ENCODE measurements at regions of chr3 and their contacts with region 1.

Region 1: DNA sequence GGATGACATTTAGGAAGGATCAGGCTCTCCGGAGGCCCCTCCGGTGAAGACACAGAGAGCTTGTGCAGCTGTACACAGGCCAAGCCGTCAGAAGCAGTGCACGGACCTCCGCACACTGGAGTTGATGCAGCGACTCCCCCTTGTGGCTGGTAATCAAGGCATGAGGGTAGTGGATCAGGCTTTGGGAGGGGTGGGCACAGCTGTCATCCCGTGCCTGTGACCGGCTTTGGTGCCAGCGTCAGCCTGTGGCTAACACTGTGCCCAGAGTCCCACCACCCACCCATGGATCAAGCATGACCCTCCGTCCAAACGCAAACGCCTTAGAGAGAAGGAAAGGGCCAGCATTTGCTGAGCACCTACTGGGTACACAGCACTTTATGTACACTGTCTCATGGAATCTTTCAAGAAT is 8.2 kb upstream of the GRIP2 start:
- DNase-seq: no peak
- H3K4me3 ChIP-seq: no peak overlapping the region
- H3K27ac ChIP-seq: no peak overlapping the region
- H3K4me1 ChIP-seq: no peaks in the 10 kb centered on the region
- H3K27me3 ChIP-seq: no peaks in the 10 kb centered on the region
- CTCF ChIP-seq: peak; percentile 47 to 70 (median 50)

Region 2: DNA sequence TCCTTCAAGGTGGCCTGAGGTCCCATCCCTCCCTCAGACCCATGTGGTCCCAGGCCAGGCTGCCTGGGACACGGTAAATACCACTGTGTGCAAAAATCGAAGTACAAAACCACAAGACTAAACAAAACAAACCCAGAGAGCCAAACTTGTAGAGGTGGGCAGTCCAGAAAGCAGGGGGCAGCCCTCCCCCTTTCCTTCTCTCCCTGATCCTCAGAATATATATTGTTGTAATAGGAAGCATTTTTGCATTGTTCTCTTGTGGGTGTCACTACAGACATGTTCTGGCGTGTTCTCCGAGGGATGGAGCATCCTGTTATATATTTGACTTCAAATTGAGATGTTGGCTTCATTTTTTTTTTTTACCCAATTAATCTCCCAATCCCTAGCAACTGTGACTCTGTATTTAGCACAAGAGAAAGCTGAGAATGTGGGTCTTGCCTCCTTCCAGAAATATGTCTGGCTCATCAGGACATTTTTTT is 59.7 kb before region 1 on chr3:
- intact Hi-C with region 1: no loop called
- DNase-seq: no peak
- H3K4me3 ChIP-seq: no peak overlapping the region
- H3K27ac ChIP-seq: no peak overlapping the region
- H3K4me1 ChIP-seq: peaks cover 0 to 6% of the 10 kb centered on the region in 2 donors
- H3K27me3 ChIP-seq: no peaks in the 10 kb centered on the region
- CTCF ChIP-seq: no peak

Region 3: DNA sequence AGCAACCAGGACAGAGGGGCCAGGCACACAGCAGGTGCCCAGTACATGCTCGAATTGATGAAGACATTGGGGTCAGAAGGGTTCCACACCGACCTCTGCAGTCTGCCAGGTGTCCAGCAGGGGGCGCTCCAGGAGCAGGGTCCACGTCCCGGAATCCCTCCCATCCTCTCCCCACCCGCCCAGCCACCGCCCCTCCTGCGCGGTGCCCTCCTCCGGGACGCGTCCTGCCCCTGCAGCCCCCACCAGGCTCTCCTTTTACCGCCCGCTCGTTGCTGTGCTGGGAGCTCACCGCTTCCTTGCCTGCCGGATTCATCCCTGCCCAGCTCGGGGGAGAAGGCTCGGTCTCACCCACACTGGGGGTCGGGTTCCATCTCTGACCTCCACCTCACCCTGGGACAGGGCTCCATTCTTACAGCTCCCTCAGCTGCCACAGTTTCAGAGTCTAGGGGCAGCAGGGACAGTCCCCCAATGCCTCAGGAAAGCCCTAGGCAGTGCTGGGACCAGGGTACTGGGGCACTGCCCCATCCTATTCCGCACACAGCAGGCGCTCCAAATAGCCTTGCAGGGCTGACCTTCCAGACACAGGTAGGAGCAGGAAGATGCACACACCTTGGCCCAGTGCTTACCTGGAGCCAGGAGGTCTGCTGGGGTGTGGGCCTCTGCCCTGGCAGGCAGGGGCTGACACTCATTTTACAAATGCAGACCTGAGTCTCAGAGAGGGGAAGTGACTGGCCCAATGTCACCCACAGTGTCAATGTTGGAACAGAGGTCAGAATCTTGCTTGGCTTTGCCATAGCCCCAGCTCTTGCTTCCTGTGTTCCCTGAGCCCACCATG is 39.1 kb before region 1 on chr3:
- intact Hi-C with region 1: loop called (anchors 1 kb)
- DNase-seq: peak in 1 of 2 donors; percentile 76
- H3K4me3 ChIP-seq: peak overlapping the region in 1 of 2 donors; percentile 24
- H3K27ac ChIP-seq: no peak overlapping the region
- H3K4me1 ChIP-seq: no peaks in the 10 kb centered on the region
- H3K27me3 ChIP-seq: no peaks in the 10 kb centered on the region
- CTCF ChIP-seq: peak; percentile 64 to 92 (median 91)